ENCODE measurements at regions of chr22 and their contacts with region 1.

Region 1: GRCh38 chr22:40679964-40680818 is 907 bp downstream of the MCHR1 start:
- DNase-seq: no peak
- H3K4me3 ChIP-seq: no peak overlapping the region
- H3K27ac ChIP-seq: no peak overlapping the region
- H3K4me1 ChIP-seq: no peaks in the 10 kb centered on the region
- H3K27me3 ChIP-seq: no peaks in the 10 kb centered on the region
- CTCF ChIP-seq: no peak

Region 2: GRCh38 chr22:40636380-40637182 is 43.6 kb before region 1 on chr22 and contains the start of gene MRTFA:
- intact Hi-C with region 1: no loop called
- DNase-seq: peak; percentile 100
- H3K4me3 ChIP-seq: peak within 1 kb of the TSS; percentile 98
- H3K27ac ChIP-seq: peak within 1 kb of the TSS; percentile 86
- H3K4me1 ChIP-seq: peaks cover 3% of the 10 kb centered on the region
- H3K27me3 ChIP-seq: no peaks in the 10 kb centered on the region
- CTCF ChIP-seq: no peak
- total RNA-seq, gene MRTFA: 31.9 to 35.6 TPM

Region 3: DNA sequence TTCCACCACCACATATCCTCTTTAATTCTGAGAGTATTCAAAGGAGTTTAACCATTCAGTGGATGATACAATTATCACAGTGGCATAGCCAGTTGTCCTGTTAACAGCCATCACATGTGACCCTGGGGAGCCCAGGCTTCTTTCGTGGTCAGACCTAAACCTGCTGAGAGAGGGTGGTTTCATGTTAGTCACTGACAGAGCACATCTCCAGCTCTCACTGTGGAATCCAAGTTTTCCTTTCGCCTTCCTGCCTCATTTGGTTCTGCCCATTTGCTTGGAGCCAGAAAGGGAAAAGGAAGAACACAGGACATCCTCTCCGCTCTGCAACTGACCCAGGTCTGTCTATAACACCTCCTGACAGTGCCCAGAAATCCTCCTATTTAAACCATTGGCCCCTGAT is 59.5 kb after region 1 on chr22:
- intact Hi-C with region 1: no loop called
- DNase-seq: no peak
- H3K4me3 ChIP-seq: no peak overlapping the region
- H3K27ac ChIP-seq: no peak overlapping the region
- H3K4me1 ChIP-seq: no peaks in the 10 kb centered on the region
- H3K27me3 ChIP-seq: no peaks in the 10 kb centered on the region
- CTCF ChIP-seq: no peak

Region 4: DNA sequence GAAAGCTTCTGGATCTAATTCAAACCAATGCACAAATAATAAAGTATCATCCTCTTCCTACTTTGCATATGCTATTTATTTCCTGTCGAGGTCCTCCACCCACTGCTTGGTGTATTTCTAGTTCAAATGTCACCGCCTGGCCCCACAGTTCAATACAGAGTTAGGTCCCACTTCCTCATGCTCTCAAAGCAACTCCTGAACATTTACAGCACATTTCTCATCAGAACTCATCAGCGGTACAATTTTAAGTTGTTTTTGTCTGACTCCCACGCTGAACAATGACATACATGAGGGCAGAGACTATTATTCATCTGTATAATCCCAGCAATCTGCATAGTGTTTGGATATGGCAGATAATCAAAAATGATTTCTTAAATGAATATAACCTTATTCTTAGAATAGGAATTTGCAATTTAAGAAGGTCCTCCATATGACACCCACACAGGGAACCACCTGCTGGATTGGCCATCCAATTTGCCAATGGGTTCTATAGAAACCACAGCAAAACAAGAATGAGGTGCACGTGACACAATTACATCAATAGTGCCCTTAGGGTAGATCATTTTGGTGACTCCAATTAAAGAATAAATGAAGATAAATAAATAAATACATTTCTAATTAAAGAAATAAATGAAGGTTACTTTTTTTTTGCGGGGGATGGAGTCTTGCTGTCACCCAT is 84.7 kb after region 1 on chr22:
- intact Hi-C with region 1: loop called (anchors 2 kb)
- DNase-seq: no peak
- H3K4me3 ChIP-seq: no peak overlapping the region
- H3K27ac ChIP-seq: no peak overlapping the region
- H3K4me1 ChIP-seq: no peaks in the 10 kb centered on the region
- H3K27me3 ChIP-seq: no peaks in the 10 kb centered on the region
- CTCF ChIP-seq: no peak

Region 5: DNA sequence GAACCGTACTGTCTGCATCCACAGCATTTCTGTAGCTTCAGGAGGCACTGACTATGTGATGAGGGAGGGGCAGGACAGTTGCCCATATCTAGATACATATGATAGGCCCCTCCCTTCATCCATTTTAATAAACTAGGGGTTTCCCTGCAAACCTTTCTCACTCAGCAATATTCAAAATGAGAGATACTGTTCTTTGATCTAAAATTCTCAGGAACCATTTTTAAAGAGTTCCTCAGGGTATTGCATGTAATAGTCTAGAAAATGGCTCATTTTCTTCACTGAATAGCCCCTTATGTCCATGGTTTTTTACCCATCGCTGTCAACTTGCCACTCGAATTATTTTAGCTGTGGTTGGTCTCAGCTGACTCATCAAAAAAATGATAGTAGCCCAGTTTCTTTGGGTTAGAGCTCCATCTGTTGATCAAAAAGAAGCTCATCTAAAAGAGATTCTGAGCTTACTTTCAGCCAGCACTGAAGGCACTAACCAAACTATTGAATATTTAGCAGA is 218.7 kb after region 1 on chr22:
- intact Hi-C with region 1: loop called (anchors 10 kb)
- DNase-seq: no peak
- H3K4me3 ChIP-seq: no peak overlapping the region
- H3K27ac ChIP-seq: no peak overlapping the region
- H3K4me1 ChIP-seq: no peaks in the 10 kb centered on the region
- H3K27me3 ChIP-seq: no peaks in the 10 kb centered on the region
- CTCF ChIP-seq: peak; percentile 27